ENCODE measurements at regions of chr6 and their contacts with region 1.

Region 1: DNA sequence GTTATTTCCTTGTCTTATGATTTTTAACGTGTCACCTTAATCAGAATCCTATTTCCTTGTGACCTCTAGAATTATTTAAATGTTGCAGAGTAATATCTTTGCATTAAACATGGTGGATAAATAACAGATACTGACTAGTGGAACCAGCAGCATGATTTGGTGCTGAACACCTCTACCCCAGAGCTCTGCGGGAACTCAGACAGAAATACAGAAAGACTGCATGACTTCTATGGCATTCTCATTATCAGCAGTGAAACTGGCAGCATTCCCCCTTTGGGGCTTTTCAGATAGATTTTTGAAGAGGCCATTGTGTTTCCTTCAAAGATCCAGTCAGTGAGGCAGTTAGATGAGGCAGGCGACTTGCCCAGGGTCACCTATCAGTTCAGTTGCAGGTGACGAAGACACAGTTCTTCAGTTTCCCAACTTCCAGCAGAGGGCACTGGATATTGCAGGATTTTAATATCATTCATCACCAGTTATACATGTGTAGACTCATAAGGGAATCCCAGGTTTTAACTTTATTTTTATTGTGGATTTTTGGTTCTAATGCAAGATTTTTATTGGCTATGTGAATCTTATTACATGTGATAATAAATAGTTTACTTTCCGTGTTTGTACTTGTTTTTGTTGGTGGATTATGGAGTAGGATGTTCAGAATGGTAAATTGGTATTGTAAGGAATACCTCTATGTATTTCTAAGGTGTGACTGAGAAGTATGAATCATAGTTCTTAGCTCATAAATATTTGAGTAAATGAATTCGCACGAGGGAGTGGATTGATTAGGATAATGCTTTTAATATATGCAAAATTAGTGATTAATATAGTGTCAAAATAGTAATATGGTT is 81.3 kb downstream of the AFDN start:
- DNase-seq: peak; percentile 50
- H3K4me3 ChIP-seq: no peak overlapping the region
- H3K27ac ChIP-seq: no peak overlapping the region
- H3K4me1 ChIP-seq: peaks cover 5% of the 10 kb centered on the region
- H3K27me3 ChIP-seq: no peaks in the 10 kb centered on the region
- CTCF ChIP-seq: peak; percentile 44 to 52

Region 2: DNA sequence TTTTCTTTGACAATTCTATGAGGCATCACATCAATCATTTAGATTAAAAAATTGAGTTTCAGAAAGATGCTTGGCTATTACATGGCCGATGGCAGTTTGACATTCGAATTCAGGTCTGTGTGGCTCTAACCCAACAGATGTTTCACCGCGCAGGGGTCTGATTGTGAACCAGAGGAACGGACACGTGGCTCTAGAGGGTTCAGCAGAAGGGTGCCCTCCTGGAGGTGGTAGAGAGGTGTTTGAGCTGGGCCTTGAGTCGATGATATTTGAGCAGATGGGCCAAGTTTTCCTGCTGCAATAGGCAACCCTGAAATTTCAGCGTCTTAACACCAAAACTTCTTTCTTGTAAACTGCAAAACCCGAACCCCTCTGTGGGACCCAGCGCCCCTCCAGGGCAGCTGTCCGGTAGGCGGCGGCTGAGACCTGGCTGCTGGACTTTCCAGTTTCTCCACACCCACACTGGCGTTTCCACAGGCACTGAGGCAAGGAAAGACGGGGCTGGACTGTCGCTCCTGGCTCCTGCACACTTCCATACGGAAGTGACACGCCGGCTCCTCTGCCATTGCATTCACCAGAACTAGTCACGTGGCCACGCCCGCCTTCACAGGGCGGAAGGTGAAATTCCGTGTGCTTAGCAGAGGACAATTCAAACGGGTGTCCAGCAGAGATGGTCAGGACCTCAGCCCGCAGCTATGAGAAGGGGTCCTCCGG is 92.6 kb before region 1 on chr6:
- CTCF ChIA-PET with region 1: no interaction called
- dilution Hi-C with region 1: no loop called
- in situ Hi-C with region 1: no loop called
- intact Hi-C with region 1: no loop called
- DNase-seq: no peak
- H3K4me3 ChIP-seq: no peak overlapping the region
- H3K27ac ChIP-seq: no peak overlapping the region
- H3K4me1 ChIP-seq: no peaks in the 10 kb centered on the region
- H3K27me3 ChIP-seq: no peaks in the 10 kb centered on the region
- CTCF ChIP-seq: no peak

Region 3: DNA sequence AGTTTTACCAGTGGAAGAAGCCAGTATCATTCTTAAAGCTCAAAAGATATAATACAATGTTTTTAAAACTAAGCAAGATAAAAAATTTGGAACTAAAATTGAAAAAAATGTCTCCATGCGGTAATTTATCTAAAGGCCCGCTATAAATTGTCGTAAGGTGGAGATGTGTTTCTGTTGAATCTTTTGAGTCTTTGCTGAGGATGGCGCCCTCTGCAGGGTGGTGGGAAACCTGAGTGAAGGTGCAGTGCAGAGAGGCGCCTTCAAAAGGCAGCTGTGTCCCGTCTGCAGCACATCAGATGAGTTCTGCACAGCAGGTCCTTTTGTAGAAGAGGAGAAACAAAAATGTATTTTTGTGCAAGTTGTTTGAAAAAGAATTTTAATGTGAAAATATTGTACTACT is 60.0 kb after region 1 on chr6:
- CTCF ChIA-PET with region 1: no interaction called
- dilution Hi-C with region 1: no loop called
- in situ Hi-C with region 1: no loop called
- intact Hi-C with region 1: loop called (anchors 1 kb)
- DNase-seq: no peak
- H3K4me3 ChIP-seq: no peak overlapping the region
- H3K27ac ChIP-seq: no peak overlapping the region
- H3K4me1 ChIP-seq: no peaks in the 10 kb centered on the region
- H3K27me3 ChIP-seq: no peaks in the 10 kb centered on the region
- CTCF ChIP-seq: peak; percentile 40 to 55

Region 4: DNA sequence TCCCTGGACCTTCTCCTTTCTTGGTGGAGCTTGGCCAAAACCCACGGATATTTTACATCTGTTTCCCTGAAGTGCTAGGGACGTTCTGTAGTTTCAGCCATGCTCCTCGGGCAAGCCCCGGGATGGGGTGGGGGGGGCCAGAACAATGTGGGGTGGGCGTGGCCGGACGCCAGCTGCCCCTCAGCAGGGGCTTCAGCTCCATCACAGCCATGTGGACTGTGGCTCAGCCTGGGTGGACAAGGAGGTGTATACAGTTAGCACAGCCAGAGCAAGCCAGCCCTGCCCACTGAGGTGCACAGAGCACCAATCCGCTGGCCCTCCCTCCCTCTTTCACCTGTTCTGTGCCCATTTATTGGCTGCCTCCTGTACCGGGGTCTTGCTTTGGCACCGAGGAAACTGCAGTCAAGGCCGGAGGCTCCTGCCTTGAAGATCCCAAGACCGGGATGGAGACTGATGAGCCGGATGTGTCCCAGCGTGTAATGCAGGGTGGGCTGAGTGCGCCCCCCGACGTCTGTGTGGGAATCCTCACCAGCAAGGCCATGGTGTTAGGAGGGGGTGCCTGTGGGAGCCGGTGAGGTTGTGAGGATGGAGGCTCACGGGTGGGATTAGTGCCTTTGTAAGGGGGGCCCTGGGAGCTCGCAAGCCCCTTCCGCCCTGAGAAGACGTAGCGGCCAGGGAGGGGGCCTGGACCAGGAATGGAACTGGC is 143.0 kb after region 1 on chr6:
- CTCF ChIA-PET with region 1: no interaction called
- dilution Hi-C with region 1: no loop called
- in situ Hi-C with region 1: no loop called
- intact Hi-C with region 1: loop called (anchors 2 kb)
- DNase-seq: no peak
- H3K4me3 ChIP-seq: no peak overlapping the region
- H3K27ac ChIP-seq: no peak overlapping the region
- H3K4me1 ChIP-seq: no peaks in the 10 kb centered on the region
- H3K27me3 ChIP-seq: no peaks in the 10 kb centered on the region
- CTCF ChIP-seq: no peak

Region 5: GRCh38 chr6:168117942-168118341 is 209.9 kb after region 1 on chr6:
- CTCF ChIA-PET with region 1: no interaction called
- dilution Hi-C with region 1: no loop called
- in situ Hi-C with region 1: no loop called
- intact Hi-C with region 1: loop called (anchors 1 kb)
- DNase-seq: no peak
- H3K4me3 ChIP-seq: no peak overlapping the region
- H3K27ac ChIP-seq: no peak overlapping the region
- H3K4me1 ChIP-seq: no peaks in the 10 kb centered on the region
- H3K27me3 ChIP-seq: no peaks in the 10 kb centered on the region
- CTCF ChIP-seq: peak; percentile 21 to 48

Region 6: GRCh38 chr6:168132531-168133167 is 224.6 kb after region 1 on chr6:
- CTCF ChIA-PET with region 1: interaction called, 10 read pairs
- dilution Hi-C with region 1: no loop called
- in situ Hi-C with region 1: no loop called
- intact Hi-C with region 1: loop called (anchors 1 kb)
- DNase-seq: no peak
- H3K4me3 ChIP-seq: no peak overlapping the region
- H3K27ac ChIP-seq: no peak overlapping the region
- H3K4me1 ChIP-seq: no peaks in the 10 kb centered on the region
- H3K27me3 ChIP-seq: no peaks in the 10 kb centered on the region
- CTCF ChIP-seq: peak in 1 of 2 donors; percentile 19

Measured in mammary epithelial cell (primary cell).